ENCODE measurements at regions of chr1 and their contacts with region 1.

Region 1: GRCh38 chr1:223088713-223089240 is 54.3 kb downstream of the TLR5 start:
- DNase-seq: no peak
- ATAC-seq: no peak
- H3K4me3 ChIP-seq: no peak overlapping the region
- H3K27ac ChIP-seq: no peak overlapping the region
- H3K4me1 ChIP-seq: no peaks in the 10 kb centered on the region
- H3K27me3 ChIP-seq: no peaks in the 10 kb centered on the region
- CTCF ChIP-seq: no peak
- POLR2A ChIP-seq: no peak
- RAD21 ChIP-seq: no peak

Region 2: GRCh38 chr1:222792744-222793143 is 296.0 kb before region 1 on chr1:
- CTCF ChIA-PET with region 1: interaction called, 13 read pairs
- POLR2A ChIA-PET with region 1: no interaction called
- RAD21 ChIA-PET with region 1: no interaction called
- intact Hi-C with region 1: loop called (anchors 2 kb)
- DNase-seq: no peak
- ATAC-seq: peak; percentile 70
- H3K4me3 ChIP-seq: no peak overlapping the region
- H3K27ac ChIP-seq: no peak overlapping the region
- H3K4me1 ChIP-seq: no peaks in the 10 kb centered on the region
- H3K27me3 ChIP-seq: no peaks in the 10 kb centered on the region
- CTCF ChIP-seq: peak; percentile 29 to 88 (median 76); a peak in 5 of 6 replicates
- POLR2A ChIP-seq: no peak
- RAD21 ChIP-seq: peak; percentile 90

Region 3: DNA sequence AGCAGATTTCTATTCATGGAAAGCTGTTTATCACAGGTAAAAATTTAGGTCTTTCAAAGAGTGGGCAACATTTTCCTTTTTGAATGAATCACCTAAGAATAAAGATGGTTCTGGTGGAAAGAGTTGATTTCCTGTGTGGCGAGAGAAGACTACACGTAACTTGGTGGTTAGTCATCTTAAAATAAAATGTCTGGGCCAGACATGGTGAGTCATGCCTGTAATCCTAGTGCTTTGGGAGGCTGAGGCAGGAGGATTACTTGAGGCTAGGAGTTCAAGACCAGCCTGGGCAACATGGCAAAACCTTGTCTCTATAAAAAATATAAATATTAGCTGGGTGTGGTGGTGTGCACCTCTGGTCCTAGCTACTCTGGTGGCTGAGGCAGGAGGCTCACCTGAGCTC is 208.2 kb before region 1 on chr1:
- CTCF ChIA-PET with region 1: no interaction called
- POLR2A ChIA-PET with region 1: no interaction called
- RAD21 ChIA-PET with region 1: no interaction called
- intact Hi-C with region 1: no loop called
- DNase-seq: peak; percentile 34
- ATAC-seq: peak; percentile 63
- H3K4me3 ChIP-seq: no peak overlapping the region
- H3K27ac ChIP-seq: no peak overlapping the region
- H3K4me1 ChIP-seq: peaks cover 0 to 8% of the 10 kb centered on the region in 2 experiments; a peak in 2 of 4 replicates
- H3K27me3 ChIP-seq: no peaks in the 10 kb centered on the region
- CTCF ChIP-seq: no peak
- POLR2A ChIP-seq: no peak
- RAD21 ChIP-seq: no peak

Measured in HCT116 (cell line).